Right ventricle myocardium inferior (tissue), 1 donor: ENCODE measurements at regions of chr9 and their contacts with region 1.

Region 1: GRCh38 chr9:25177858-25178257 is 500.4 kb downstream of the TUSC1 start:
- DNase-seq: no peak
- ATAC-seq: no peak

Region 2: DNA sequence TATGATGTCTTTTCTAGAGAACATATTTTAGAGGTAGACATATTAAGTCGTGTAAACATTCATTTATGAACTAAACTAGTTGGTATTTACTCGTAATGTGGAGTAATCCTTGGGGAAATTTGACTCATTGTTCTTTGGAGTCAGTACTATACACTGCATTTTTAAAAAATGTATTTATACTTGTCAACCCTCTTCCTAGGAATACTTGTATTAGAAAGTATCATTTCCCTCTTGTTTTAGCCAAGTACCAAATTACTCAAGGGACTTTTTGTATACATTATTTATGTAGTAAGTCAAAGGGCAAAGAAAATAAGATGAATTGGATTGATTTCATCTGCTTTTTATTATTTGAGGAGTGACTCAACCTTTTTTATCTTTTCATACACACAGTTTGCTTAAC is 384.1 kb before region 1 on chr9:
- intact Hi-C with region 1: loop called (anchors 10 kb)
- DNase-seq: no peak
- ATAC-seq: no peak

Region 3: DNA sequence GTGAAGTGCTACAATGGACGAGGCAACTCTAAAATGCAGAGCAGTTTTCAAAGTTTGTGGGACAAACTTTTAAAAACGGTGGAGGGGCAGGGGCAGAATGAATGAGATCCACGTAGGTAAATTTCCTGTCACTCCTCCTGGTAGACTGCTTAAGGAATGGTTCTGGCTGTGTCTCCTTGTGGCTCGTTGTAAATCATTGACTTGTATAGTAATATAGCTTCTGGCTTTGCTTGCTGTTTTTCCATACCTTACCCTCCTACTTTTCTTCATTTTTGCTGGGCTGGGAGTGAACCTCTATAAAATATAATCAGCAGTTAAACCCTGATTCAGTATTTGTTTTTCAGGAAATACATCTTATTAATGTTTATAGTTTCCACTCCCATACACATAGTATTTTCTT is 264.7 kb after region 1 on chr9:
- intact Hi-C with region 1: no loop called
- DNase-seq: no peak
- ATAC-seq: no peak